Mammary epithelial cell (primary cell): ENCODE measurements at regions of chr16 and their contacts with region 1.

Region 1: DNA sequence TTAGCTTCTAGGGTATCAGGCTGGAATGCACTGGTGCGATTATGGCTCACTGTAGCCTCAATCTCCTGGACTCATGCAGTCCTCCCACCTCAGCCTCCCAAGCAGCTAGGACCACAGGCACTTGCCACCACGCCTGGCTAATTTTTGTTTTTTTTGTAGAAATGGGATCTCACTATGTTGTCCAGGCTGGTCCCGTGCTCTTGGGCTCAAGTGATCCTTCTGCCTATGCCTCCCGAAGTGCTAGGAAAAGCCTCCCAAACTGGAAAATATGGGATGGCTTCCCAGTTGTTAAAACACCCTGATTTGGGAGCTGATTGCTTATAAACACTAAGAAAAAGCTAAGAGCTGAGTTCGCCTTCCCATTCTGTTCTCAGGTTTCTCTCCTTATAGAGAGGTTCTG is 6.6 kb upstream of the ZNF263 start:
- DNase-seq: no peak
- H3K4me3 ChIP-seq: no peak overlapping the region
- H3K27ac ChIP-seq: no peak overlapping the region
- H3K4me1 ChIP-seq: no peaks in the 10 kb centered on the region
- H3K27me3 ChIP-seq: no peaks in the 10 kb centered on the region
- CTCF ChIP-seq: no peak

Region 2: GRCh38 chr16:3234543-3235541 is 41.8 kb before region 1 on chr16 and contains the start of gene ZNF200:
- CTCF ChIA-PET with region 1: no interaction called
- dilution Hi-C with region 1: loop called (anchors 5 kb)
- in situ Hi-C with region 1: no loop called
- intact Hi-C with region 1: no loop called
- DNase-seq: peak; percentile 95
- H3K4me3 ChIP-seq: peak within 1 kb of the TSS; percentile 81 to 90 (median 82)
- H3K27ac ChIP-seq: peak within 1 kb of the TSS; percentile 62
- H3K4me1 ChIP-seq: peaks cover 4% of the 10 kb centered on the region
- H3K27me3 ChIP-seq: no peaks in the 10 kb centered on the region
- CTCF ChIP-seq: no peak
- total RNA-seq, gene ZNF200: 10.0 to 10.5 TPM

Region 3: DNA sequence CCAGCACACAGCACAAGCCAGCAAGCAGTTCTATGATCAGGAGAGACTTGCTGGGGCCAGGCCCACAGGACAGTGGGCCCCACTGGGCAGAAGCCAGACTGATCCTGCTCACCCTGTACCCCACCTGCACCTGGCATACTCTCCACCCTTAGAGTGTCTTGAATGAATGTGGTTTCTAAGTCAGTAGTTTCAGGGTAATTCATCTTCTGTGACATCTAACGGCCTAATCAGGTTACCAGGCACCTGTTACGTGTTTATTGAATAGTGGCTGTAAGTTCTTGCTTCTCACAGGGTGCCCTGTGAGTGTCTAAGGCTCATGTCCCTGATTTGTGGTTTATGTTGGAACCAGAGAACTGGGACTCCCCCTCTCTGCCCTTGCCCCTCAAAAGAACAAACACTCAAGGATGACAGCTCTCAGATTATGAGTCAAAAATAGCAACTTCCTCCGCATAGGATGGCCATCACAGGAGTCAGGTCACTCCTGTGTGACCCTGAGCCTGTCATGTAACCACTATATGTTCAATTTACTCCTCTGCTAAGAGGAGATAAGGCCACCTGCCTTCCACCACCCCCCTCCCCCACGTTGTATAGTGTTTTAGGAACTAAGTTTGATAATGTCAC is 72.0 kb after region 1 on chr16:
- CTCF ChIA-PET with region 1: no interaction called
- dilution Hi-C with region 1: no loop called
- in situ Hi-C with region 1: no loop called
- intact Hi-C with region 1: no loop called
- DNase-seq: no peak
- H3K4me3 ChIP-seq: no peak overlapping the region
- H3K27ac ChIP-seq: no peak overlapping the region
- H3K4me1 ChIP-seq: no peaks in the 10 kb centered on the region
- H3K27me3 ChIP-seq: no peaks in the 10 kb centered on the region
- CTCF ChIP-seq: no peak

Region 4: GRCh38 chr16:3374385-3374784 is 97.7 kb after region 1 on chr16:
- CTCF ChIA-PET with region 1: no interaction called
- dilution Hi-C with region 1: loop called (anchors 5 kb)
- in situ Hi-C with region 1: no loop called
- intact Hi-C with region 1: no loop called
- DNase-seq: no peak
- H3K4me3 ChIP-seq: no peak overlapping the region
- H3K27ac ChIP-seq: no peak overlapping the region
- H3K4me1 ChIP-seq: no peaks in the 10 kb centered on the region
- H3K27me3 ChIP-seq: no peaks in the 10 kb centered on the region
- CTCF ChIP-seq: no peak